GM12878 (cell line): ENCODE measurements at regions of chr6 and their contacts with region 1.

Region 1: DNA sequence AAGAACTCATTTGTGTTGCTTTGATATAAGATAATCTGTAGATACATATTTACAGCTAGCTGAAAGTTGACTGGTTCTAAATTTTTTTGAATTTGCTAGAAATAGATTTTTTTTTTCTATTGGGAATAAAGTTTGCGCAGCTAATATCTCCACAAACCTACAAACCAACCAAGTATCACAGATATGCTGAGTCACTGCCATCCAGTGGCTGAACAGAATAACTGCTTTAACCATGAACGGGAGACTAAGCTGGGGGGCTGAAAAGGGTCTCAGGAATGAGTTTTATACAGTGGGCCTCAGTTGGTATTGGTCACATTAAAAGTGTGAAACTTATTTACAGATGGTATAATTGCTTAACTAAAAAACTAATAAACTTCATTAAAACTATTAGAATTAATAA is 326.7 kb upstream of the CNR1 start:
- DNase-seq: no peak
- ATAC-seq: no peak
- H3K4me3 ChIP-seq: no peak overlapping the region
- H3K27ac ChIP-seq: peak overlapping the region; percentile 91
- H3K4me1 ChIP-seq: peaks cover 16% of the 10 kb centered on the region
- H3K27me3 ChIP-seq: no peaks in the 10 kb centered on the region
- CTCF ChIP-seq: peak; percentile 10 to 27 (median 15); a peak in 2 of 6 replicates
- EP300 ChIP-seq: no peak
- POLR2A ChIP-seq: no peak
- RAD21 ChIP-seq: peak; percentile 52

Region 2: DNA sequence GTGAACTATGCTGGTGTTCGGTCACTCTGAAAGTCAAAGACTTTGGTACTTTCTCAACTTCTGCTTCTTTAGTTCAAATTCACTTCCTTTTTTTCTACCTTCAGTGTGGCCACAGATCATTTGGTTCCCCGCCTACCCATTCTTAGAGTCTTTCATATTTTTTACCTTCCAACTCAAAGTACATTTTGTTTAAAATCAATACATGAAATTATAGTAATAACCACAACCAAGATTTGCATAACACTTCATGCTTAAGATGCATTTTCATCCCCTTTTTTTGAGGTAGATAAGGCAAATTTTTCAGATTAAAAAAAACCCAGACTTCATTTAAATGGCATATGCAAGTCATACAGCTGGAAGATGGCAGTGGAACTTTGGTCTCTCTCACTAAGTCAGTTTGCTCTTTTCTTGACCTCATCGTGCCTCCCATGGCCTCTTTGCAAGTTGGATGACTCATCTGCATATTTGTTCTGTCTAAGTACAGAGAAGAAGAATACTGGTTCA is 314.8 kb before region 1 on chr6:
- CTCF ChIA-PET with region 1: interaction called, 4 read pairs
- POLR2A ChIA-PET with region 1: no interaction called
- RAD21 ChIA-PET with region 1: interaction called, 4 read pairs
- SMC1A ChIA-PET with region 1: interaction called, 4 read pairs
- in situ Hi-C with region 1: no loop called
- intact Hi-C with region 1: loop called (anchors 5 kb)
- DNase-seq: peak; percentile 32
- ATAC-seq: peak; percentile 75
- H3K4me3 ChIP-seq: no peak overlapping the region
- H3K27ac ChIP-seq: no peak overlapping the region
- H3K4me1 ChIP-seq: peaks cover 16% of the 10 kb centered on the region; the same call in 1 of the 2 replicates
- H3K27me3 ChIP-seq: no peaks in the 10 kb centered on the region
- CTCF ChIP-seq: no peak
- EP300 ChIP-seq: no peak
- POLR2A ChIP-seq: no peak
- RAD21 ChIP-seq: no peak

Region 3: DNA sequence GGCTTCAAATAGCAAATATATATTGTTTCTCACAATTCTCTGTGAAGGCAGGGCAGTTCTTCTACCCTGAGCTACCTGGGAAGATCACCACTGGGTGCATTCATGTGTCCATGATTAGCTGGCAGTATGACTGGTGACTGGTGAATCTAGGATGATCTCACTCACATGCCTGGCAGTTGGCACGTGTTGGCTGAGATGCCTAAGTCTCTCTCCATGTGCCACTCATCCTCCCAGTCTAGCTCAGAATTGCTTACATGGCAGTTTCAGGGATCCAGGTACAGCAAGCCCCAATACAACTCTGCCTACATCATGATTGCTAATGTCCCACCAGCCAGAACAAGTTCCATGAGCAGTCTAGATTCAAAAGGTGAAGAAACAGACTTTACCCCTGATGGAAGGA is 20.1 kb after region 1 on chr6:
- CTCF ChIA-PET with region 1: interaction called, 11 read pairs
- POLR2A ChIA-PET with region 1: no interaction called
- RAD21 ChIA-PET with region 1: interaction called, 7 read pairs
- SMC1A ChIA-PET with region 1: interaction called, 15 read pairs
- in situ Hi-C with region 1: no loop called
- intact Hi-C with region 1: no loop called
- DNase-seq: no peak
- ATAC-seq: no peak
- H3K4me3 ChIP-seq: no peak overlapping the region
- H3K27ac ChIP-seq: no peak overlapping the region
- H3K4me1 ChIP-seq: no peaks in the 10 kb centered on the region
- H3K27me3 ChIP-seq: no peaks in the 10 kb centered on the region
- CTCF ChIP-seq: no peak
- EP300 ChIP-seq: no peak
- POLR2A ChIP-seq: no peak
- RAD21 ChIP-seq: no peak

Region 4: GRCh38 chr6:88641178-88641903 is 148.5 kb after region 1 on chr6:
- CTCF ChIA-PET with region 1: interaction called, 12 read pairs
- POLR2A ChIA-PET with region 1: interaction called, 15 read pairs
- RAD21 ChIA-PET with region 1: interaction called, 47 read pairs
- SMC1A ChIA-PET with region 1: interaction called, 36 read pairs
- in situ Hi-C with region 1: no loop called
- intact Hi-C with region 1: no loop called
- DNase-seq: peak; percentile 88
- ATAC-seq: peak; percentile 92
- H3K4me3 ChIP-seq: 0 out of 2 replicates have a peak overlapping the region, but pooled peaks have one; percentile 8
- H3K27ac ChIP-seq: peak overlapping the region; percentile 88
- H3K4me1 ChIP-seq: peaks cover 15% of the 10 kb centered on the region
- H3K27me3 ChIP-seq: no peaks in the 10 kb centered on the region
- CTCF ChIP-seq: no peak
- EP300 ChIP-seq: peak; percentile 12 to 58; a peak in 1 of 4 replicates
- POLR2A ChIP-seq: no peak
- RAD21 ChIP-seq: no peak

Region 5: DNA sequence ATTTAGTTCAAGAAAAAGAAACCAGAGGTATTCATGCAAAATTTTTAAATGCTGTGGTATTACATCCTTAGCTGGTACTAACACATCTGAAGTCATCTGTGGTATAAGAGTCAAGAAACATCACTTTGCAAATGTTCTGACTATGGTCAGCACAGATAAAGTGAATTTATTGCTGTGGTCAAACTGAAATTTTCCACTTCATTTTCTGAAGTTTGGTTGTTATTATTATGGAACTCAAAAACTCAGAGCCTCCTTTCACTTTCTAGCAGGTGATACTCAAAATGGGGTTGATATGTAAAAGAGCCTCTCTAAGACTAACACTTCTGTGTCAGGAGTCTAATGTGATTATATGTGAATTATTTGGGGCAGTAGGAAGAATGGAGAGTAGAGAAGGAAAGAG is 212.8 kb after region 1 on chr6:
- CTCF ChIA-PET with region 1: interaction called, 3 read pairs
- POLR2A ChIA-PET with region 1: no interaction called
- RAD21 ChIA-PET with region 1: interaction called, 7 read pairs
- SMC1A ChIA-PET with region 1: interaction called, 9 read pairs
- in situ Hi-C with region 1: no loop called
- intact Hi-C with region 1: loop called (anchors 5 kb)
- DNase-seq: peak; percentile 81
- ATAC-seq: peak; percentile 96
- H3K4me3 ChIP-seq: no peak overlapping the region
- H3K27ac ChIP-seq: peak overlapping the region; percentile 53; the same call in 1 of the 2 replicates
- H3K4me1 ChIP-seq: peaks cover 22% of the 10 kb centered on the region; the same call in 1 of the 2 replicates
- H3K27me3 ChIP-seq: no peaks in the 10 kb centered on the region
- CTCF ChIP-seq: no peak
- EP300 ChIP-seq: peak; percentile 78 to 85
- POLR2A ChIP-seq: no peak
- RAD21 ChIP-seq: 0 out of 2 replicates have a peak, but pooled peaks have one; percentile 2

Region 6: DNA sequence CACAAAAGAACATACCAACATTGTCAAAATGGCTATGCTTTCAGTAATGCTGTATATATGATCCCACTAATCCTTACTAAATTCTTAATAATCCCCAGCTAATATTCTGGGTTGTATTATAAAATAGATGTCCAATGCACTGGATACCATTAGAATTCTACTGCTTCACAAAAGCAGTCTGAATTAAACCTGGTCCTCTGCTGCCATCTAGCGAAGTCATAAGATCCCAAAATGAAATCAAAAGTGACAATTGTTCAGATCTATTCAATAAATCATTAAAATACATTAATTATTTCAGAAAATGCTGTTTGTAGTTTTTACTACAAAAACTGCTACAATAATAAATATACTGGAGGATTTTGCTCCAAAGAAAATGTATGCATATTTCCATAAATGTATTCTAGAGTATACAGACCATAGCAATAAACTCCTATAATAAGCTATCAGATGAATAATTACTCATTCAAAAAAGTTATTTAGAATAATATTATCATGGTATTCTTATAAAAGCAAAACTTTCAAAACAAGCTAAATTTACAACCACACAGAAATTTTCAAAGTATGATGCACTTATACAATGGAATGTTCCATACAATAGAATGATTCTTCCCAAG is 378.0 kb after region 1 on chr6:
- CTCF ChIA-PET with region 1: interaction called, 22 read pairs
- POLR2A ChIA-PET with region 1: interaction called, 4 read pairs
- RAD21 ChIA-PET with region 1: interaction called, 5 read pairs
- SMC1A ChIA-PET with region 1: interaction called, 28 read pairs
- in situ Hi-C with region 1: no loop called
- intact Hi-C with region 1: loop called (anchors 1 kb)
- DNase-seq: peak; percentile 39
- ATAC-seq: peak; percentile 78
- H3K4me3 ChIP-seq: no peak overlapping the region
- H3K27ac ChIP-seq: no peak overlapping the region
- H3K4me1 ChIP-seq: peaks cover 10% of the 10 kb centered on the region
- H3K27me3 ChIP-seq: no peaks in the 10 kb centered on the region
- CTCF ChIP-seq: peak; percentile 46 to 70 (median 55); a peak in 5 of 6 replicates
- EP300 ChIP-seq: no peak
- POLR2A ChIP-seq: no peak
- RAD21 ChIP-seq: peak; percentile 89